A549 (cell line): ENCODE measurements at regions of chr20 and their contacts with region 1.

Region 1: DNA sequence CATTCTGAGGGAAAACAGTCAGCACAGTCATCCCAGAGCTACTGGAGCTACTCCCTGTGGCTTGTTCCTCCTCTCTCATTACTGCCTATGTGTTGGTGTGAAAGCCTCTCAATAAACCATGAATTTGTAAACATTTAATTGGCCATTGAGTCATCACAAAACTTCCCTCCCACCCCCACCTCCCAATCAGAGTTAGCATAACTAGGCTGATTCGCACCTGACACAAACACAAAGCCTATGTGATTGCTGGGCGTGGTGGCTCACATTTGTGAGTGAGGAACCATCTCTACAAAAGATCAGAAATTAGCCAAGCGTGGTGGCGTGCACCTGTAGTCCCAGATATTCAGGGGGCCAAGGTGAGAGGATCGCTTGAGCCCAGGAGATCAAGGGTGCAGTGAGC is 17.1 kb upstream of the SNTA1 start:
- DNase-seq: no peak
- ATAC-seq: no peak; a peak in 1 of 6 replicates
- H3K4me3 ChIP-seq: no peak overlapping the region
- H3K27ac ChIP-seq: no peak overlapping the region
- H3K4me1 ChIP-seq: no peaks in the 10 kb centered on the region
- CTCF ChIP-seq: no peak
- EP300 ChIP-seq: no peak
- POLR2A ChIP-seq: no peak
- RAD21 ChIP-seq: no peak

Region 2: DNA sequence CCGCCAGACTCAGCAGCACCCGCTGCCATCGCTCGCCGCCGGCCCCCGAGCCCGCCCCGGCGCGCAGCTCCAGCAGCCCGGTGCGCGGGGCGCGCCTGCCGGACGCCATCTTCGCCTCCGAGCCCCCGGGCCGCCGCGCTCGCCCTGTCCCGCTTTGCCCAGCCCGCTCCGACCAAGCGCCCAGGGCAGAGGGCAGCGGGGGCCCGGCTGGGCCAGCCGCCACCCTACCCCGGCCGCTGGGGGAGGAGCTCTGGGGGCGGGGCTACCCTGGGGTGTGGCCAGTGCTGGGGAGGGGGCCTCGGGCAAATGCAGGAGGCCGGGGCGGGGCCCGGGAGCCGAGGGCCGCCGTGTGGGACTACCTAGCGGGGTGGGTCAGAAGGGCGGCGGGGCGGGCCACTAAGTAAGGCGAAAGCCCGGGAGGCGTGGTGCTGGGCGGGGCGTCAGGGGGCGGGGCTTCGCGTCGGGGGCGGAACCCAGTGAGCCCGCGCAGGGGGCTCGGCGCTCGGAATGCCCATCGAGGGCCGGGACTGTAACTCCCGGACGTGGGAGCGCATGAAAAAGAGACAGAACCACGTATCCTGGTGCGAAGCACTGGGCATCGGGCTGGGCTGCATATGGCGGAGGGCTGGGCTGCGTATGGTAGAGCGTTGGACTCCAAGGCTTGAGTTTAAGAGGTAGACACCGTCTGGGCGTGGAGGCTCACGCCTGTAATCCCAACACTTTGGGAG is 17.0 kb before region 1 on chr20 and contains the start of gene SNTA1:
- CTCF ChIA-PET with region 1: interaction called, 11 read pairs
- POLR2A ChIA-PET with region 1: no interaction called
- DNase-seq: peak; percentile 84 to 86
- ATAC-seq: peak; percentile 84 to 95
- H3K4me3 ChIP-seq: peak within 1 kb of the TSS; percentile 83
- H3K27ac ChIP-seq: peak within 1 kb of the TSS; percentile 72 to 89
- H3K4me1 ChIP-seq: peaks cover 5% of the 10 kb centered on the region; the same call in 2 of the 3 replicates
- CTCF ChIP-seq: no peak
- EP300 ChIP-seq: no peak
- POLR2A ChIP-seq: peak; percentile 24
- RAD21 ChIP-seq: no peak
- polyA plus RNA-seq, gene SNTA1: 5.6 and 6.5 TPM in 2 replicates

Region 3: DNA sequence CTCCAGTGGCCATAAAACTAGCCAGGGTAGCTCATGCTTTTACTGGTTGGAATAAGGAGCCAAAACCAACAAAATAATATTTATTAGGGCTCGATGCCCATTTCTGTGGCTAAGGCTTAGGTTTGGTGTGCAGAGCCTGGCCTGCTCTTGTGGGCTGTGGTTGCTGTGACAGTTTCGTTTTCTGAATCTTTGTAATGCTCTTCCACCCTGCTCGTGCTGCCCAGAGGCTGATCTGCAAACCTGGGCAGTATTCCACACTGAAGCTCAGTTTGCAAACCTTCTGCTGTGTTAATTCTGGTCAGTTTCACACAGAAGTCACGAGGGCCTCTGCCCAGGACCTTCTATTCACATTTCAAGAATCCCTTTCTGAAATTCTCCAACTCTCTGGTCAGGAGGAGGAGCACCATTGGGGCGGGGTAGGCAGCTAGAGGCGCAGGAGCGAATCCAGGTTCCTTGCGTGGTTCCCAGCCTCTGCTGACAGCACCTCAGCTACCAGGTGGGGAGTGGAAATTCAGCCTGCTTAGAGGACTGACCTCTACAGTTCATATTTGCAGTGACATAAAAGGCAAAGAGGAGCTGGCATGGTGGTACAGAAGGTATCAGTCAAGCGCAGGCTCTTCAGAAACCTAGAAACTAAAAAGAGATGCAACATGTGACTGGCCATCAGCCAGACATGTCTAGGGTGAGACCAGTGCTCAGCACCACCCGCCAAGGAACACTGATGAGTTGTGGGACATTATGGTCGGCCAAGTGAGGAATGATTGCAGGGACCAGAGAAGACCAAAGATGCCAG is 187.1 kb after region 1 on chr20:
- CTCF ChIA-PET with region 1: interaction called, 20 read pairs
- POLR2A ChIA-PET with region 1: no interaction called
- DNase-seq: no peak
- ATAC-seq: no peak
- H3K4me3 ChIP-seq: no peak overlapping the region
- H3K27ac ChIP-seq: no peak overlapping the region
- H3K4me1 ChIP-seq: no peaks in the 10 kb centered on the region
- CTCF ChIP-seq: no peak
- EP300 ChIP-seq: no peak
- POLR2A ChIP-seq: no peak
- RAD21 ChIP-seq: no peak

Region 4: DNA sequence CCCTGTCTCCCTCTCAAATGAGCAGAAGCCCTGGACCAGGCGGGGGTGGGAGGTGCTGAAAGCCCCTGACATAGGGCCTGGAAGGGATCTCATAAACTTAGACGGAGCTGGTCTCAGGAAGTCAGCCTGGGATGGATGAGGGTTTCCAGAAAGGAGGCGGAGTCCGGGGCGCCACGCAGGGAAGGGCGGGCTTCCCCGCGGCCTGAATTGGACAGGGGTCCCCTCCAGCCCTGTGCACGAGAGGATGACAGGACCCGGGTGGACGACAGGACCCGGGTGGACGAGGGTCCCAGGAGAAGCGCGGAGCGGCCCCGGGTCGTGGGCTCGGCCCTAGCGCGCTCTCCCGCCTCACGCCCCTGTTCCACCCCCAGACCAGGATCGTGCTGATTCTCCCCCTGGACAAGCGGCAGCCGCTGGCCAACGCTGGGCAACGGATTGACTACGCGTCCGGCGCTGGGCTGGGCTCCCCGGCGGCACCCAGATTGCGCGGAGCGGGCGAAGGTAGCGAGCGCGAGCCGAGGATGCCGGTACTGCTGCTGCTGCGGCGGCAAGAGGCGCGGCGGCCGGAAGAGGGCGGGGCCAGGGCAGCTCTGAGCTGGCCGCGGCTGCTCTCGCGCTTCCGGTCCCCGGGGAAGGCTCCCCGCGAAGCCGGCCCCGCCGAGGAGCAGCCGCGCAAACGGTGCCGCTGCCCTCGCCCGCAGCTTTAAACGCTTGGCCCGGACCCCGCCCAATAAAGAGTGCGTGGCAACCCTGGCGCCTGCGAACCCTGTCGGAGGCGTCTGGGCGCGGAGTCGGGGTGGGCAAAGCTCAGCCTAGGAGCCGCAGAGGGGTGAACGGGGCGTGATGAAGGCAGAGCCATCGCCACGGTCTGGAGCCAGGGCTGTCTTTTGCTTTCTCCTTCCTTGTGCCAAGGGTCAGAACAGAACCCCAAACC is 202.7 kb after region 1 on chr20:
- CTCF ChIA-PET with region 1: interaction called, 15 read pairs
- POLR2A ChIA-PET with region 1: no interaction called
- DNase-seq: peak; percentile 68 to 73
- ATAC-seq: peak; percentile 86 to 93
- H3K4me3 ChIP-seq: peak overlapping the region; percentile 68
- H3K27ac ChIP-seq: peak overlapping the region; percentile 83 to 95
- H3K4me1 ChIP-seq: peaks cover 15% of the 10 kb centered on the region
- CTCF ChIP-seq: no peak
- EP300 ChIP-seq: no peak
- POLR2A ChIP-seq: peak; percentile 78
- RAD21 ChIP-seq: no peak